Cardiac septum (tissue), 1 donor: ENCODE measurements at regions of chr7 and their contacts with region 1.

Region 1: DNA sequence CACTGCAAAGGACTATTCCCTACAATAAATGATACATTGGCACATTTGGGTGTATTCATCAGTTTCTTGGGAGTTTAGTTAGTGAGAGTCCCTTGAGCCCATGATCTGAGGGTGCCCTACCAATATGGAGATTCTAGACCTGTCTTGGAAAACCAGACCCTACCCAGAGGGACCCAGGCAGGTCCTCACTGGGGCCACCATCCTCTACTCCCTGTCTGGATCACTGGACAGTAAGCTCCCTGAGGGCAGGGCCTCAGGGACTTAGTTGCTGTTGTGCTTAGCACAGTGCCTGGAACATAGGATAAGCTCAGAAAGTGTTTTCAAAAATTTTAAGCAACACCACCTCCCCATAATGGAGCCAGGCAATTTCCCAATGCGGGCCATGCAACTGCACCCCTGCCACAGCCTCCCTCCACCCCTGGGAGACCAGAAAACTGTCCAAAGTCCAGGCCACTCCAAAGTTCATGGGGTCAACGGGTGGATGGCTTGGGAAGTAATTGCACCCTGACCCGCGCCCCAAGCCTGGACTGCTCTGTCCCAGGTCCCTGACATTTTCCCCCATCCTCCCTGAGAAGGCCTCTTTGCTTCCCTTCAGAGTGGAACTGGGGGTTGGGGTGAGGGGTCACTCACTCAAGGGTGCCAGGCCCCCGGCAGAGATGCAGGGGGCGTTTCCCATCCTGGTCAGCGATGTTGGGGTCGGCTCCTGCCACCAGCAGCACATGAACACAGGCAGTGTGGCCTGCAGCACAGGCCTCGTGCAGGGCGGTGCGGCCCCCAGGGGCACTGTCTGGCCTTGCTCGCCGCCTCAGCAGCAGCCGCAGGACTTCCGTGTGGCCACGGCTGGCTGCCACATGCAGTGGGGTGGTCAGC is 1.1 kb downstream of the ASB10 start:
- DNase-seq: peak; percentile 73

Region 2: DNA sequence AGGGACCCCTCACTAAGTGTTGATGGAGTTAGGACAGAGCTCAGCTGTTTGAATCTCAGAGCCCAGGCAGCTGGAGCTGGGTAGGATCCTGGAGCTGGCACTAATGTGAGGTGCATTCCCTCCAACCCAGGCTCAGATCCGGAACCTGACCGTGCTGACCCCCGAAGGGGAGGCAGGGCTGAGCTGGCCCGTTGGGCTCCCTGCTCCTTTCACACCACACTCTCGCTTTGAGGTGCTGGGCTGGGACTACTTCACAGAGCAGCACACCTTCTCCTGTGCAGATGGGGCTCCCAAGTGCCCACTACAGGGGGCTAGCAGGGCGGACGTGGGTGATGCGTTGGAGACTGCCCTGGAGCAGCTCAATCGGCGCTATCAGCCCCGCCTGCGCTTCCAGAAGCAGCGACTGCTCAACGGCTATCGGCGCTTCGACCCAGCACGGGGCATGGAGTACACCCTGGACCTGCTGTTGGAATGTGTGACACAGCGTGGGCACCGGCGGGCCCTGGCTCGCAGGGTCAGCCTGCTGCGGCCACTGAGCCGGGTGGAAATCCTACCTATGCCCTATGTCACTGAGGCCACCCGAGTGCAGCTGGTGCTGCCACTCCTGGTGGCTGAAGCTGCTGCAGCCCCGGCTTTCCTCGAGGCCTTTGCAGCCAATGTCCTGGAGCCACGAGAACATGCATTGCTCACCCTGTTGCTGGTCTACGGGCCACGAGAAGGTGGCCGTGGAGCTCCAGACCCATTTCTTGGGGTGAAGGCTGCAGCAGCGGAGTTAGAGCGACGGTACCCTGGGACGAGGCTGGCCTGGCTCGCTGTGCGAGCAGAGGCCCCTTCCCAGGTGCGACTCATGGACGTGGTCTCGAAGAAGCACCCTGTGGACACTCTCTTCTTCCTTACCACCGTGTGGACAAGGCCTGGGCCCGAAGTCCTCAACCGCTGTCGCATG is 51.5 kb after region 1 on chr7:
- intact Hi-C with region 1: loop called (anchors 5 kb)
- DNase-seq: no peak